Activated T-helper 1 cell treated with anti-CD3 and anti-CD28 coated beads, Interleukin-12 subunit alpha, Interleukin-12 subunit beta, Interleukin-2, Interleukin-4 antibody, amounts not matched to agents 30 ng/mL and 10 ng/mL and 1 ng/mL, durations not matched to agents 14 hours and 24 hours and 36 hours (primary cell): ENCODE measurements at regions of chr1 and their contacts with region 1.

Region 1: DNA sequence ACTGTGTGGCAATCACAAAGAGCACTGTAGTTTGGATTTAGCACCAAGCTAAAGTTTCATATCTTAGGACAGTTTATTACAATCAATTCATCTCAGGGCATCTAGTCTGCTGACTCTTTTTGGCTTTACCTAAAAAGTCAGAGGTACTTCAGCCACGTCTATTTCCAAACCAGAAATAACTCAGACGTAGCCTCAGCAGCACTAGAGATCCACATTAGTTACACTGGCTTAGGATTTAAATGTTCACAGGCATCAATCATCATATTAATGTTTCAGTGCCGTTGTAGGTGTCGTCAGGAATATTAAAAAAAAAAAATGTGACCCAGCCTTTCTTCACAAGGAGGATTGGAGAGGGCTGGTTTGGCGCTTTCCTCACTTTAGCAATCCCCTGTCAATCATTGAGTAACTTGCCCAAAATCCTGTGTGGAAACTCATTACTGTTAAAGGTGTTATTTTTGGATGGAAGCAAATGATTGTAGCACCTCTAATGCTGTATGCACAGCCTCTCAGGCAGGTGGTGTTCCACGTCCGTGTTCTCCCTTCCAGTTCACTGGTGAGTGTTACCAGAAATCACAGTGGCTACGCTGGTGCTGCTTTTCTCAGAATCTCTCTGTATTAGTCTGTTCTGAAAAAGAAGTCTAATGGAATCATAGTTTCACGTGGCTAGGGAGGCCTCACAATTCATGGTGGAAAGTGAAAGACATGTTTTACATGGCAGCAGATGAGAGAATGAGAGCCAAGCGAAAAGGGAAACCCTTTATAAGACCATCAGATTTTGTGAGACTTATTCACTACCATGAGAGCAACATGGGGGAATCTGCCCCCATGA is 45.4 kb downstream of the NEK7 start:
- DNase-seq: no peak
- H3K4me3 Mint-ChIP-seq: peak overlapping the region; percentile 76
- H3K27ac Mint-ChIP-seq: peak overlapping the region; percentile 78
- H3K4me1 Mint-ChIP-seq: peaks cover 68% of the 10 kb centered on the region
- H3K27me3 Mint-ChIP-seq: no peaks in the 10 kb centered on the region

Region 2: GRCh38 chr1:198167436-198167934 is 34.7 kb before region 1 on chr1:
- intact Hi-C with region 1: loop called (anchors 2 kb)
- DNase-seq: peak; percentile 20
- H3K4me3 Mint-ChIP-seq: peak overlapping the region; percentile 56
- H3K27ac Mint-ChIP-seq: peak overlapping the region; percentile 91
- H3K4me1 Mint-ChIP-seq: peaks cover 78% of the 10 kb centered on the region
- H3K27me3 Mint-ChIP-seq: no peaks in the 10 kb centered on the region

Region 3: GRCh38 chr1:198187973-198188588 is 14.1 kb before region 1 on chr1:
- intact Hi-C with region 1: loop called (anchors 1 kb)
- DNase-seq: no peak
- H3K4me3 Mint-ChIP-seq: peak overlapping the region; percentile 49
- H3K27ac Mint-ChIP-seq: peak overlapping the region; percentile 78
- H3K4me1 Mint-ChIP-seq: peaks cover 67% of the 10 kb centered on the region
- H3K27me3 Mint-ChIP-seq: no peaks in the 10 kb centered on the region

Region 4: DNA sequence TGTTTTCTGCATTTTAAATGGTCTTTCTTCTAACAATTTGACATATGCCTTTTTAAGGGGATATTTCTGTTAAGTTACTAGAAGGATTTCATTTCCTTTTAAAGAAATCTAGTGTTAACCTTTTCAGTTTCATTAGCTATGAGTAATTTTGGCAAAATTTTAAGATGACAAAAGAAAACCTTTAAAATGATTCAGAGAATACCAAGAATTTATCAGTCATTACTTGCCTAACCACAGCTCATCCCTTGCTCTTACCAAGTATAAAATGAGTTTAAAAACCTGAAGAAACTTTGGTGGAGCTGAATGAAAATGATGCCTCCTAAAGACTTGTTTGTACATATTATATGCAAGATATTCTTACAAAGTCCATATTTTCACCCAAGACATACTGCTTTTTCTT is 56.3 kb after region 1 on chr1:
- intact Hi-C with region 1: loop called (anchors 1 kb)
- DNase-seq: no peak
- H3K4me3 Mint-ChIP-seq: peak overlapping the region; percentile 11
- H3K27ac Mint-ChIP-seq: peak overlapping the region; percentile 78
- H3K4me1 Mint-ChIP-seq: peaks cover 50% of the 10 kb centered on the region
- H3K27me3 Mint-ChIP-seq: no peaks in the 10 kb centered on the region

Region 5: GRCh38 chr1:198367296-198367695 is 165.1 kb after region 1 on chr1:
- intact Hi-C with region 1: loop called (anchors 2 kb)
- DNase-seq: no peak
- H3K4me3 Mint-ChIP-seq: no peak overlapping the region
- H3K27ac Mint-ChIP-seq: no peak overlapping the region
- H3K4me1 Mint-ChIP-seq: no peaks in the 10 kb centered on the region
- H3K27me3 Mint-ChIP-seq: peaks cover 10% of the 10 kb centered on the region